WTC11 (cell line): ENCODE measurements at regions of chr1 and their contacts with region 1.

Region 1: DNA sequence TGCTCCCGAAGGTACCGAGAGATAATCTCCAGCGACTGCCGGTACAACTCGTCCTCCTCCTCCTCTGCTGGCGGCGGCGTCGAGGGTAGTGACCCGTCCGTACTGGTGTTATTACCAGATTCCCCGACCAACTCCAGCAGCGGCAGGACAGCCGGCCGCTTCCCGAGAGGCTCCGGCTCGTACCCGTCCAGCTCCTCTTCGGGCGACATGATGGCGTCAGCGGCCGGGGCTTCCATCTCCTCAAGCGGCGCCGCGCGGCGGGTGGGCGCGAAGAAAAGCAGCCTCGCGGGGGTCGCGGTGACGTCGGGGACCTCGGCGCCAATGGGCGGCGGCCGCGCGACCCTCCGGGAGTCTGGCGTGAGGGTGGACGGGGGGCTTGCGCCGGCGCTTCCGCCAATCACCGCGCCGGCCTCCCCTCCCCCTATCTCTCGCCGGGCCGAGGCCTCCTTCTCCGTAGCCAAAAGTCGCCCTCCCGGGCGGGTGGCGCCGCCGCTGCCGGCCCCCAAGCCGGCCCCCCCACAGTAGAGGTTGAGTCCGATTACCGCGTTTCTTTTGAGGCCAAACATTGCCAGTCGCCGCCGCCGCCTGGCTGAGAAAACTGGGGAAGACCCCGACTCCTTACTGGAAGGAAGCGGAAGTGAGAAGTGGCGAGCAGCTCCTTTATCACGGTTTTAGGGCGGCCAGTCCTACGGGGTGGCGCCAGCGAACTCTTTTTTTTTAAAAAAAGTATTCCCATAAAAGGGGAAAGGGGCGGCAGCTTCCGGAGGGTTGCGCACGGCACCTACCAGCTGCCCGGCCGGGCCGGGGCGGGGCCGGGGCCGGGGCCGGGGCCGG is at the start of gene MCL1:
- DNase-seq: peak; percentile 89
- ATAC-seq: peak; percentile 88
- H3K4me3 Mint-ChIP-seq: peak within 1 kb of the TSS; percentile 92
- H3K27ac Mint-ChIP-seq: peak within 1 kb of the TSS; percentile 100
- H3K4me1 Mint-ChIP-seq: peaks cover 41% of the 10 kb centered on the region
- H3K27me3 Mint-ChIP-seq: no peaks in the 10 kb centered on the region; the same call in 1 of the 2 replicates
- CTCF ChIP-seq: no peak
- total RNA-seq, gene MCL1: 191 to 212 TPM (median 204 TPM) in 3 replicates

Region 2: DNA sequence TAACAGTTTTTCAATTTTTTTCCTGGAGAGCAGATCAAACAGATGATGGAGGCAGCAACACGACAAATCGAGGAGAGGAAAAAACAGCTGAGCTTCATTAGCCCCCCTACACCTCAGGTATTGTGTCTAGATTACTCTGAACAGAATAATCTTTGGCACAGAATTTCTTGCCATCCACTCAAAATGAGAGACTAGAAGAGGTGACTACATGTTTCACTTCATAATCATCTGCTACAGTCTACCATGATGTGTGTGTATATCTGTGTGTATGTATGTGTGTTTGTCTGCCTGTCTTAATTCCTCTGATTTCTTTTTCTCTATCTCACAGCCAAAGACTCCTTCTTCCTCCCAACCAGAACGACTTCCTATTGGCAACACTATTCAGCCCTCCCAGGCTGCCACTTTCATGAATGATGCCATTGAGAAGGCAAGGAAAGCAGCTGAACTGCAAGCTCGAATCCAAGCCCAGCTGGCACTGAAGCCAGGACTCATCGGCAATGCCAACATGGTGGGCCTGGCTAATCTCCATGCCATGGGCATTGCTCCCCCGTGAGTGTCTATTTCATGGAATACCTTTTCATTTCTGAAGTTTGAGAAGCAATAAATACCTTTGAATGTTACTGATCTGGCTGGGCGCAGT is 246.4 kb before region 1 on chr1:
- CTCF ChIA-PET with region 1: no interaction called
- POLR2A ChIA-PET with region 1: no interaction called
- DNase-seq: no peak
- ATAC-seq: no peak
- H3K4me3 Mint-ChIP-seq: no peak overlapping the region
- H3K27ac Mint-ChIP-seq: no peak overlapping the region
- H3K4me1 Mint-ChIP-seq: no peaks in the 10 kb centered on the region
- H3K27me3 Mint-ChIP-seq: no peaks in the 10 kb centered on the region
- CTCF ChIP-seq: no peak

Region 3: DNA sequence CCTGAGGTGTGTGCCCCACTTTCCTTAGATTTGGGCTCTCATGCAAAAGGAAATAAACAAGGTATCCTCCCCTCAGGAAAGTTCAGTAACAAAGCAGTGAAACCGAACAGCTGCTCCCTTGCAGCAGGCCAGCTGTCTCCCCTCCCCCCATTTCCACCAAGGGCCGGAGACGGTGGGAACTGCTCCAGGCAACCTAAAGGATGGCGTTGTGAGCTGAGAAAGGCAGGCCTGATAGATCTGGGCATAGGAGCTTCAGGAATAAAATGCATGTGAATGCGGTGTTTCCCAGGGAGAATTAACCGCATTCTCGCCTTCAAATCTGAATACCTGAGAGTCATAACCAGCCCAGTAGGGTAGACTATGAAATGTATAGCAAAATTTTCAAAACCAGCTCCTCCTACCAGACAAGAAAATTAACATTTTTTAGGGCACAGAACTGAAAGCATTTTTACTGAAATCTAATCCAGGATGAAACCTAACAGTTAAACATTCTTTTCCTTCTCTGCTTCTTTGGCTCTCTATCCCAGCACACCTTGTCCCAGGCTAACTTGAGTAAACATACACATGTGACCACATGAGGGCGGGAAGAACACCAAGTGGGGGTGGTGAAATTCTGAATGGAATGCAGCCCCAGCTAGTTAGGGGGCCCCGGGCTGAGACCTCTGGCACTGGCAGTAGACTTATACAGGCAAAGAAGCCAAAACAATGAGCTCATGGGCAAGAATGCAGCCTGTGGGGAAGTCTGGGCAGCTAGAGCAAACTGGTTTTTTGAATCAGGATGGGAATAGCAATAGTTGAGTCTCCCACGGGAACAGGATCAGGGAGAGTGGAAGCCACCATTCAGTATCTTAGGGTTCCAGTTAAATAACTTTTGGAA is 11.2 kb before region 1 on chr1:
- CTCF ChIA-PET with region 1: interaction called, 59 read pairs
- POLR2A ChIA-PET with region 1: interaction called, 188 read pairs
- DNase-seq: peak; percentile 91
- ATAC-seq: peak; percentile 78
- H3K4me3 Mint-ChIP-seq: peak overlapping the region; percentile 57
- H3K27ac Mint-ChIP-seq: peak overlapping the region; percentile 100
- H3K4me1 Mint-ChIP-seq: peaks cover 77% of the 10 kb centered on the region
- H3K27me3 Mint-ChIP-seq: no peaks in the 10 kb centered on the region
- CTCF ChIP-seq: no peak

Region 4: GRCh38 chr1:150606463-150607148 is 27.4 kb after region 1 on chr1:
- CTCF ChIA-PET with region 1: interaction called, 6 read pairs
- POLR2A ChIA-PET with region 1: interaction called, 20 read pairs
- DNase-seq: no peak
- ATAC-seq: no peak
- H3K4me3 Mint-ChIP-seq: no peak overlapping the region
- H3K27ac Mint-ChIP-seq: peak overlapping the region; percentile 90
- H3K4me1 Mint-ChIP-seq: peaks cover 42% of the 10 kb centered on the region
- H3K27me3 Mint-ChIP-seq: no peaks in the 10 kb centered on the region; the same call in 1 of the 2 replicates
- CTCF ChIP-seq: no peak